ENCODE measurements at regions of chr2 and their contacts with region 1.

Region 1: DNA sequence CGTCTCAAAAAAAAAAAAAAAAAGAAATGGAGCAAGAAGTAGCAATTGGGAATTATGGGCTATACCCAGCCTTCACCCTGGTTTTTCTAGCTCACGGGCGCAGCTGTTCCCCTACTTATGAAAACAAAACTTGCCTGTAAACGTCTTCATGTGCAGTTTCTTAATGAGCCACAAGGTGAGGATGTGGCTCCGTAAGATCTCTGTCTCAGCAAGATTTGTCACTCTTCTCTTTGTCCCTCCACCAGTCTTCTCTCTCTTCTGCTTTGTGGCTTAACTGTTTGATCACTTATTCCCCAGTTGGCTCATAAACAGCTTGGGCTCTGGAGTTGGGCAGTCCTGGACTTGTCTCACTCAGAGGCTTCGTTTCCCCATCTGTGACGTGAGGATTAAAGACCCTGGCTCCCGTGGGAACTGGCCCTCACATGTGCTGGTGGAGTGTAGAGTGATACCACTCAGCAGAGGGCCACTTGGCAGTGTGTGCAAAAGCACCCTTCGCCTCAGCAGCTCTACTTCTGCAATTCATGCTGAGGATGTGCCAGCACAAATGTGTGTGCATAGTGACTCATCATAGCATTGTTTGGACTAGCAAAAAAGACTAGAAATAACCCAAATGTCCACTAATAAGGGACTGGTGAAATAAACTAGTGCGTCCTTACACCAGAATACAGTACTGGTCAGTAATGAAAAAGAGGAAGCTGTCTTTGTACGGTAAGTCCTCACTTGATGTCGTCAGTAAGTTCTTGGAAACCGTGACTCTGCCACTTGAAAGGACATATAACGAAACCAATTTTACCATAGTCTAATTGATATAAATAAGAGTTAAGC is 8.7 kb downstream of the CEP68 start:
- DNase-seq: peak; percentile 96
- ATAC-seq: peak; percentile 83
- H3K4me3 ChIP-seq: no peak overlapping the region
- H3K27ac ChIP-seq: peak overlapping the region; percentile 35; the same call in 1 of the 2 replicates
- H3K4me1 ChIP-seq: peaks cover 26% of the 10 kb centered on the region
- H3K27me3 ChIP-seq: no peaks in the 10 kb centered on the region
- CTCF ChIP-seq: peak; percentile 52
- POLR2A ChIP-seq: peak; percentile 14; the same call in 1 of the 2 replicates
- RAD21 ChIP-seq: peak; percentile 62

Region 2: GRCh38 chr2:64945973-64946768 is 118.8 kb before region 1 on chr2:
- CTCF ChIA-PET with region 1: no interaction called
- POLR2A ChIA-PET with region 1: no interaction called
- dilution Hi-C with region 1: no loop called
- in situ Hi-C with region 1: no loop called
- intact Hi-C with region 1: no loop called
- DNase-seq: peak; percentile 17
- ATAC-seq: 0 out of 2 replicates have a peak, but pooled peaks have one; percentile 30
- H3K4me3 ChIP-seq: no peak overlapping the region
- H3K27ac ChIP-seq: no peak overlapping the region
- H3K4me1 ChIP-seq: peaks cover 8% of the 10 kb centered on the region
- H3K27me3 ChIP-seq: peaks cover 14% of the 10 kb centered on the region
- CTCF ChIP-seq: no peak
- POLR2A ChIP-seq: no peak
- RAD21 ChIP-seq: no peak

Region 3: DNA sequence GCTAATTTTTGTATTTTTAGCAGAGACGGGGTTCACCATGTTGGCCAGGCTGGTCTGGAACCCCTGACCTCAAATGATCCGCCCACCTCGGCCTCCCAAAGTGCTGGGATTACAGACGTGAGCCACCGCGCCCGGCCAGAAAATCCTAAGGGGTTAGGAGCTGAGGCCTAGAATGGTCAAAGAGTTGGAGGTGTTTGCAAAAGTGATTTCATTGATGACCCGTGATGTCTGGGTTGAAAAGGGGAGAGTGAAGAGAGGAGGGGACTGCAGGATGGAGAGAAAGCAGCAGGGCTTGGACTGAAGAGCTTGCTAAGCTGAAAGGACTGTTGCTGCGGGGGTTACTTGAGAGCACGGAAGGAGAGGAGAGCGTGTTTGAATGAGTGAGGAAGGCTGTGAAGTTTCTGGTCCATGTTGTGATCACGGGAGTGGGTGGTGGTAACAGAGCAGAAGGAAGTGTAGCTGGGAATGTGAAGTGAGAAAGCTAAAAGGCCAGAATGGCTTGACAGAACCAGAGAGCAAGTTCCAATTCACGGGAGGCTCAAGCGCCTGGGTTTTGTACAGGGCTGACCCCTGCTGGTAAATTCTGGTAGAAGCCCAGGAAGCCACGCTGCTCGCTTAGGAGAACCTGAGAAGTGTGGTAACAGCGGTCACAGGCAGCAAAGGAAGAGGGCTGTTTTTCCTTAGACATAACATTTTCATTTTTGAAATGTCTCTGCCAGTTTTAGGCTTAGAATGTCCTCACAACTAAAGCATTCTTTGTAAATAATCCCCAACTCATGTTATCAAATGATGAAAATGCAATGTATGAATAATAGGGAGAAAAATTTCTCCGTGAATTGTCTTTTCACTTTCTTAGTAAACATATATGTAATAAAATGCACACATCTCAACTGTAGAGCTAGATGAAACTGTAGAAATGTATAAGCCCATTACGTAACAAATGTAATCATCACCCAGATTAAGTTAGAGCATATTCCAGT is 122.2 kb after region 1 on chr2:
- CTCF ChIA-PET with region 1: interaction called, 6 read pairs
- POLR2A ChIA-PET with region 1: no interaction called
- dilution Hi-C with region 1: no loop called
- in situ Hi-C with region 1: no loop called
- intact Hi-C with region 1: loop called (anchors 2 kb)
- DNase-seq: peak; percentile 75
- ATAC-seq: peak; percentile 99
- H3K4me3 ChIP-seq: no peak overlapping the region
- H3K27ac ChIP-seq: no peak overlapping the region
- H3K4me1 ChIP-seq: peaks cover 3% of the 10 kb centered on the region; the same call in 1 of the 2 replicates
- H3K27me3 ChIP-seq: peaks cover 2% of the 10 kb centered on the region; the same call in 1 of the 2 replicates
- CTCF ChIP-seq: peak; percentile 82
- POLR2A ChIP-seq: no peak
- RAD21 ChIP-seq: peak; percentile 74

Measured in IMR-90 (cell line).